Left cardiac atrium (tissue), 4 donors: ENCODE measurements at regions of chr6 and their contacts with region 1.

Region 1: DNA sequence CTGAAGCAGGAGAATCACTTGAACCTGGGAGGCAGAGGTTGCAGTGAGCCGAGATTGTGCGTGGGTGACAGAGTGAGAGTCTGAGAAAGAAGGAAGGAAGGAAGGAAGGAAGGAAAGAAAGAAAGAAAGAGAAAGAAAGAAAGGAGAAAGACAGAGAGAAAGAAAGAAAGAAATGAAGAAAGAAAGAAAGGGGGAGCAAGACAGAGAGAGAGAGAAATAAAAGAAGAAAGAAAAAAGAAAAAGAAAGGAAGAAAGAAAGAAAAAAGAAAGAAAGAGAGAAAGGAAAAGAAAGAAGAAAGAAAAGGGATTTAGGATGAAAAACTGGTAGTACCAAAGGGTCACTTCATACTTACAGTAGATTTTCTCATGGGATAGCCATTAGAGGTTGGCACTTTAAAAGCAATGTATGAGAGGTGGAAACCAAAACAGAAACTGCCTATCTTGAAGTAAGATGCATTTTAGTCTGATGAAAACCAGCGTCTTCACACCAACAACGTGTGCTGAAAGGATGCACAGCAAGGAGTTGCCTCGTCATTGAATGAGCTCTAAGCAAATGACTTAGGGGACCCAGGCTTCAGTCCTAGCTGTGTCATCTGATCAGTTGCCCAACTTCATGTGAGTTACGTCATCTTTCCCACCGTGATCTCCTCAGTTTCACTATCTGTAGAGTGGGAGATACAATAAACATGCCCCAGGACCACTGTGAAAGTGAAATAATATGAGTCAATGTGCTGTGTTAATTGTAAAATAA is 133.9 kb upstream of the NEDD9 start:
- DNase-seq: no peak
- ATAC-seq: no peak

Region 2: GRCh38 chr6:11414176-11414963 is 48.0 kb after region 1 on chr6:
- intact Hi-C with region 1: loop called in 1 of 2 experiments (anchors 10 kb)
- DNase-seq: no peak
- ATAC-seq: peak in 1 of 2 donors; percentile 30